ENCODE measurements at regions of chr6 and their contacts with region 1.

Region 1: DNA sequence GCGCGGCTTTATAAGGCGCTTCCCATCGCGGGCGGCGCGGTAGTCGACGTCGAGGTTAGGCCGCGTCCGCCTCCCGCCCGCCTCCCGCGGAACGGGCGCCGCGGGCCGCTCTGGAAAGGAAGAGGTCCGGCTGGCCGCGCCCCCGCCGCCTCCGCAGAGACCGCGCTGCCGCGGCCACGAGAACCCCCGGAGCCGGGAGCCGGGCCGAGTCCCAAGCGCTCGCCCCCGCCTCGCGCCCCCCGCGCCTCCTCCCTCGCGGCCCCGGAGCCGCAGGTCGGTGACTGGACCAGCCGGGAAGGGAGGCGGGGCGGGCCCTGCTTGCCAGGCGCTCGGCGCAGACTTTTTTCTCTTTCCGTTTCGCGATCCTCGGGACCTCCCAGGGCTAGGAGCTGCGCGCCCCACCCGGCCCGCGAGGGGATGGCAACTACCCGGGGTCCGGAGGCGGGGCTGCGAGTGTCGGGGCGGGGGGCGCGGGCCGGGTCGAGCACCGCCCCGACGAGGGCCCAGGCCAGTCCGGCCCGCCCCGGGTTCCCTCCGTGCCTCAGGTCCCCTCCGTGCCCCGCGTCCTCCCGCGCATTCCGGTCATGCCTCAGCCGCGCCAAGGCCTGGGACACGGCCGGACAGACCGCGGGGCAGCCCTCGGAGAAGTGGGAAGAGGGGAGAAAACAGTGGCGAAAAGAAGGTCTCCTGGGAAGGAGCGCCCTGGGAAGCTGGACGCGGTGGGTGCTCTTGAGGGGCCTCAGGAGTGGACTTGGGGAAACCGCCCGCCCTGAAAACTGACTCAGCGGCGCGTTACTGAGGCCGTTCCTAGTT is 423 bp upstream of the PXDC1 start:
- DNase-seq: peak; percentile 87
- ATAC-seq: peak; percentile 75
- H3K4me3 ChIP-seq: peak overlapping the region; percentile 71 to 81 (median 76)
- H3K27ac ChIP-seq: peak overlapping the region; percentile 78
- H3K4me1 ChIP-seq: peaks cover 70% of the 10 kb centered on the region
- H3K27me3 ChIP-seq: no peaks in the 10 kb centered on the region
- CTCF ChIP-seq: peak; percentile 55
- EP300 ChIP-seq: no peak
- POLR2A ChIP-seq: peak in 1 of 2 experiments; percentile 20; a peak in 1 of 4 replicates
- RAD21 ChIP-seq: peak; percentile 69

Region 2: GRCh38 chr6:3324262-3324942 is 427.5 kb before region 1 on chr6:
- CTCF ChIA-PET with region 1: no interaction called
- POLR2A ChIA-PET with region 1: no interaction called
- in situ Hi-C with region 1: no loop called
- intact Hi-C with region 1: no loop called
- DNase-seq: peak; percentile 17
- ATAC-seq: no peak
- H3K4me3 ChIP-seq: no peak overlapping the region
- H3K27ac ChIP-seq: no peak overlapping the region
- H3K4me1 ChIP-seq: no peaks in the 10 kb centered on the region
- H3K27me3 ChIP-seq: no peaks in the 10 kb centered on the region
- CTCF ChIP-seq: no peak
- EP300 ChIP-seq: no peak
- POLR2A ChIP-seq: no peak
- RAD21 ChIP-seq: no peak

Region 3: DNA sequence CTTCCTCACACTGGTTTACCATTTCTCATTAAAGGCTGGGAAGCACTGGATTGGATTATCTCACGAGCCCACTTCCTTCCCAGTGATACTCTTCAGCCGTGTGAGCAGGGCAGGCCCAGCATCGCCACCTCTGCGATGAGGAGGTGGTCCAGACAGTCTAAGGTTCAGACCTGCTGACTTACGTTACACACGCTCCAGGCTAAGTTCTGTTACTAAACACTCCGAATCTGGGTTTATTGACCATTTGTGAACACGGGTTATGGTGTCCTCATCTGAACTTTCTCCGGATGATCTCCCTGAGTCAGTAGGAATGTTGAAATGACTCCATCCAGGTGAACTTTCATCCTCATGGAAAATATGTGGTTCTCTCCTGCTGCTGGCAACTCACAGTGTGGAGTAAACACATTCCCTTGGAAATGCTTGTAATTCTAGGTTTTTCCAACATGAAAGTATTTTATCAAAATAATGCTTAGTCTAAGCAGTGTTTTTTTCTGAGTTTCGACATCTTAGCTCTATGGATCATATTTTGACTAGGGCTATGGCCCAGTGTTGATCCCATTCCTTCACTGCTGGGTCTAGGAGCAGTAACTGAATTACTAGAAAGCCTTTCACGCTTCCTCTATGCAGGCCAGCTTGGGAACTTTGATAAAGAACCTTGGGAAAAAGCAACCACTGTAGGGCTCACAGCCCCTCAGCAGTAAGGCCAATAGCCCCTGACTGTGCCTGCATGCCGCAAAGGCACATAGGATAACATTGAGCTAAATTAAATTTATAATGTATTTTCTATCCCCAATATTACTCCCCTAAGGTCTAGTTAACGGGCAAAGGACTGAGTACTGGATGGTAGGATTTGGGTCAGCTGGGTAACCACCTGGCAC is 37.3 kb after region 1 on chr6:
- CTCF ChIA-PET with region 1: no interaction called
- POLR2A ChIA-PET with region 1: interaction called, 37 read pairs
- in situ Hi-C with region 1: loop called (anchors 5 kb)
- intact Hi-C with region 1: loop called (anchors 2 kb)
- DNase-seq: peak; percentile 100
- ATAC-seq: peak; percentile 91
- H3K4me3 ChIP-seq: peak overlapping the region; percentile 40 to 73 (median 45)
- H3K27ac ChIP-seq: peak overlapping the region; percentile 97
- H3K4me1 ChIP-seq: peaks cover 62% of the 10 kb centered on the region
- H3K27me3 ChIP-seq: no peaks in the 10 kb centered on the region
- CTCF ChIP-seq: peak; percentile 7; the same call in 1 of the 2 replicates
- EP300 ChIP-seq: peak; percentile 88 to 97
- POLR2A ChIP-seq: peak; percentile 72 to 88
- RAD21 ChIP-seq: peak; percentile 21

Region 4: DNA sequence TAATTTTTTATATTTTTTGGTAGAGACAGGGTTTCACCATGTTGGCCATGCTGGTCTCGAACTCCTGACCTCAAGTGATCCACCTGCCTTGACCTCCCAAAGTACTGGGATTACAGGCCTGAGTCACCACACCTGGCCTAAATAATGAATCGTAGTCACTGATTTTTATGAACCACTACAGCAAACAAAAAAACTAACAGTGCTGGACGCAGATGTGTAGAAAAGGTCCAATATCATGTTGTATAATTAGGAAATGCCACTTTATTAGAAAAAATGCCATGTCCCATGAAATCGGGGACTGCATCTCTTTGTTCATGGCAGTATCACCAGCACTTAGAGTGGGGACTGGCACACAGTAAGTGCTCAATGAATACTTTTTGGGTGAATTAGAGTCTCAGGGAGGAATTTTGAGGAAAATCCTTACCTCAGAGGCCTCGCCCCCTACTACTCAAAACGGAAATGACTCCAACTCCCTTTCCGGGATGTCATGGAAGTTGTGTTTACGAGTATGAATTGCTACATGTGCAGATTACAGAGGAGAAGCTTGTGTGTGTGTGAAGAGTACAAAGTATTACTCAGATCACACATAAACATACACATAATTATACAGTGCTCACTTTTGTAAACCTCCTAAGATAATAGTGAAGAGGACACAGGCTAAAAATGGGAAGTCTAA is 53.6 kb after region 1 on chr6:
- CTCF ChIA-PET with region 1: no interaction called
- POLR2A ChIA-PET with region 1: interaction called, 11 read pairs
- in situ Hi-C with region 1: no loop called
- intact Hi-C with region 1: loop called (anchors 5 kb)
- DNase-seq: peak; percentile 85
- ATAC-seq: peak; percentile 57
- H3K4me3 ChIP-seq: peak overlapping the region; percentile 40 to 63 (median 44); a peak in 5 of 6 replicates
- H3K27ac ChIP-seq: peak overlapping the region; percentile 99
- H3K4me1 ChIP-seq: peaks cover 70% of the 10 kb centered on the region
- H3K27me3 ChIP-seq: no peaks in the 10 kb centered on the region
- CTCF ChIP-seq: 0 out of 2 replicates have a peak, but pooled peaks have one; percentile 5
- EP300 ChIP-seq: 0 out of 4 replicates have a peak, but pooled peaks of 1 of the 2 experiments have one; percentile 24
- POLR2A ChIP-seq: no peak
- RAD21 ChIP-seq: no peak

Region 5: GRCh38 chr6:3825851-3826581 is 74.1 kb after region 1 on chr6:
- CTCF ChIA-PET with region 1: interaction called, 9 read pairs
- POLR2A ChIA-PET with region 1: interaction called, 7 read pairs
- in situ Hi-C with region 1: loop called (anchors 5 kb)
- intact Hi-C with region 1: loop called (anchors 1 kb)
- DNase-seq: peak; percentile 73
- ATAC-seq: peak; percentile 78
- H3K4me3 ChIP-seq: peak overlapping the region; percentile 24 to 43 (median 31); a peak in 5 of 6 replicates
- H3K27ac ChIP-seq: peak overlapping the region; percentile 48
- H3K4me1 ChIP-seq: peaks cover 49% of the 10 kb centered on the region
- H3K27me3 ChIP-seq: no peaks in the 10 kb centered on the region
- CTCF ChIP-seq: no peak
- EP300 ChIP-seq: no peak
- POLR2A ChIP-seq: no peak
- RAD21 ChIP-seq: no peak

Region 6: GRCh38 chr6:3841711-3842565 is 90.0 kb after region 1 on chr6:
- CTCF ChIA-PET with region 1: no interaction called
- POLR2A ChIA-PET with region 1: interaction called, 24 read pairs
- in situ Hi-C with region 1: no loop called
- intact Hi-C with region 1: no loop called
- DNase-seq: peak; percentile 30
- ATAC-seq: peak; percentile 55
- H3K4me3 ChIP-seq: no peak overlapping the region; a peak in 1 of 6 replicates
- H3K27ac ChIP-seq: peak overlapping the region; percentile 97
- H3K4me1 ChIP-seq: peaks cover 61% of the 10 kb centered on the region
- H3K27me3 ChIP-seq: no peaks in the 10 kb centered on the region
- CTCF ChIP-seq: no peak
- EP300 ChIP-seq: no peak
- POLR2A ChIP-seq: no peak
- RAD21 ChIP-seq: no peak

Region 7: DNA sequence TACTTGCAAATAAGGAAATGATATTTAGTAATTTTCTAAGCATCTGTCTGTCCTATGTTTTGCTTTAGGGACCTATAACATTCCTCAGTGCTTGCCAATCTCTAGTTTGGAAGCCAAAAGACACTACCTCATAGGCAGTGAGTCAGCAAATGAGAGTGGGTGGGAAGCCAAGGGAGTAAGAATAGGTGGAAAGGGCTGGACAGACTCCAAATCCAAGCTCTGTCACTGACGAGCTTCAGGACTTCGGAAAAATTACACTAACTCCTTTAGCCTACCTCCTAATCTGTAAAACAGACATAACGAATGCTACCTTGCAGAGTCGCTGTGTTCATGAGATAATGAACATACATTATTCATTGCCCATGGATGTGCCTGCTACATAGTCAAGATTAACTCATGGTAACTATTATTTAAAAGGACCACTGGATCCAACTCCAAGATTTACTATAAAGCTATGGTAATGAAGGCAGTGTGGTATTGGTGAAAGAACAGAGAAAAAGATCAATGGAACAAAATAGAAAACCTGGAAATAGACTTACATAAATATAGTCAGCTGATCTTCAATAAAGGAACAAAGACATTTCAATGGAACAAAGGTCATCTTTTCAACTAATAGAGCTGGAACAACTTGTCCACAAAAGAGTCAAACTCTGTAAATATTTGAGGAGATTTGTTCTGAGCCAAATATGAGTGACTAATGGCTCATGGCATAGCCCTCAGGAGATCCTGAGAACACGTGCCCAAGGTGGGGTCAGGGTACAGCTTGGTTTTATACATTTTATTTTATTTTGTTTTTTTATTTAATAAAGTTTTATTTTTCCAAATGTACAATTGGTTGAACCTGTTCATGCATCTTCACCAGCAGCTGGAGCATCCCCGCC is 161.4 kb after region 1 on chr6:
- CTCF ChIA-PET with region 1: interaction called, 3 read pairs
- POLR2A ChIA-PET with region 1: interaction called, 22 read pairs
- in situ Hi-C with region 1: no loop called
- intact Hi-C with region 1: loop called (anchors 1 kb)
- DNase-seq: peak; percentile 99
- ATAC-seq: peak; percentile 84
- H3K4me3 ChIP-seq: peak overlapping the region in 2 of 3 experiments; percentile 4 to 34; a peak in 2 of 6 replicates
- H3K27ac ChIP-seq: peak overlapping the region; percentile 94
- H3K4me1 ChIP-seq: peaks cover 76% of the 10 kb centered on the region
- H3K27me3 ChIP-seq: no peaks in the 10 kb centered on the region
- CTCF ChIP-seq: no peak
- EP300 ChIP-seq: peak; percentile 57 to 97
- POLR2A ChIP-seq: 0 out of 4 replicates have a peak, but pooled peaks of 1 of the 2 experiments have one; percentile 18
- RAD21 ChIP-seq: 0 out of 2 replicates have a peak, but pooled peaks have one; percentile 12

Region 8: DNA sequence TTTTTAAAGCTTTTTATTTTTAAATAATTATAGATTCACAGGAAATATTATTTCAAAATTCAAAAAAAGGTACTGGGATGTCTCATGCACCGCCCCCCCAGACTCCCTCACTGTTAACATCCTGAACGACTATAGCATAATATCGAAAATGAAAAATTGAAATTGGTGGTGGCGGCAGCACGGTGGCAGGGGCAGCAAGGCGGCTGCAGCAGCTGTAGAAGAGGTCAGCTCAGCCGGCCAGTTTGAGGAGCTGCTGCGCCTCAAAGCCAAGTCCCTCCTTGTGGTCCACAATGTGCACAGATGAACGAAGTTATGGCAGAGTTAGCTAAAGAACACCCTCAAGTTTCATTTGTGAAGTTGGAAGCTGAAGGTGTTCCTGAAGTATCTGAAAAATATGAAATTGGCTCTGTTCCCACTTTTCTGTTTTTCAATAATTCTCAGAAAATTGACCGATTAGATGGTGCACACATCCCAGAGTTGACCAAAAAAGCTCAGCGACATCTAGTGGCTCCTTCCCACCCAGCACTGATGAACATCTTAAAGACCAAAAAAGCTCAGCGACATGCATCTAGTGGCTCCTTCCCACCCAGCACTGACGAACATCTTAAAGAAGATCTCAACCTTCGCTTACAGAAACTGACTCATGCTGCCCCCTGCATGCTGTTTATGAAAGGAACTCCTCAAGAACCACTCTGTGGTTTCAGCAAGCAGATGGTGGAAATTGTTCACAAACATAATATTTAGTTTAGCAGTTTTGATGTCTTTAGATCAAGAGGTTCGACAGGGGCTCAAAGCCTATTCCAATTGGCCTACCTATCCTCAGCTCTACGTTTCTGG is 226.2 kb after region 1 on chr6:
- CTCF ChIA-PET with region 1: interaction called, 11 read pairs
- POLR2A ChIA-PET with region 1: interaction called, 3 read pairs
- in situ Hi-C with region 1: no loop called
- intact Hi-C with region 1: no loop called
- DNase-seq: peak; percentile 51
- ATAC-seq: peak; percentile 96
- H3K4me3 ChIP-seq: no peak overlapping the region
- H3K27ac ChIP-seq: no peak overlapping the region
- H3K4me1 ChIP-seq: 0 out of 2 replicates have a peak, but pooled peaks cover 5% of the 10 kb centered on the region
- H3K27me3 ChIP-seq: peaks cover 0 to 2% of the 10 kb centered on the region in 2 experiments; a peak in 2 of 5 replicates
- CTCF ChIP-seq: peak; percentile 82
- EP300 ChIP-seq: no peak
- POLR2A ChIP-seq: no peak
- RAD21 ChIP-seq: peak; percentile 75